Cardiac septum (tissue), 1 donor: ENCODE measurements at regions of chr17 and their contacts with region 1.

Region 1: DNA sequence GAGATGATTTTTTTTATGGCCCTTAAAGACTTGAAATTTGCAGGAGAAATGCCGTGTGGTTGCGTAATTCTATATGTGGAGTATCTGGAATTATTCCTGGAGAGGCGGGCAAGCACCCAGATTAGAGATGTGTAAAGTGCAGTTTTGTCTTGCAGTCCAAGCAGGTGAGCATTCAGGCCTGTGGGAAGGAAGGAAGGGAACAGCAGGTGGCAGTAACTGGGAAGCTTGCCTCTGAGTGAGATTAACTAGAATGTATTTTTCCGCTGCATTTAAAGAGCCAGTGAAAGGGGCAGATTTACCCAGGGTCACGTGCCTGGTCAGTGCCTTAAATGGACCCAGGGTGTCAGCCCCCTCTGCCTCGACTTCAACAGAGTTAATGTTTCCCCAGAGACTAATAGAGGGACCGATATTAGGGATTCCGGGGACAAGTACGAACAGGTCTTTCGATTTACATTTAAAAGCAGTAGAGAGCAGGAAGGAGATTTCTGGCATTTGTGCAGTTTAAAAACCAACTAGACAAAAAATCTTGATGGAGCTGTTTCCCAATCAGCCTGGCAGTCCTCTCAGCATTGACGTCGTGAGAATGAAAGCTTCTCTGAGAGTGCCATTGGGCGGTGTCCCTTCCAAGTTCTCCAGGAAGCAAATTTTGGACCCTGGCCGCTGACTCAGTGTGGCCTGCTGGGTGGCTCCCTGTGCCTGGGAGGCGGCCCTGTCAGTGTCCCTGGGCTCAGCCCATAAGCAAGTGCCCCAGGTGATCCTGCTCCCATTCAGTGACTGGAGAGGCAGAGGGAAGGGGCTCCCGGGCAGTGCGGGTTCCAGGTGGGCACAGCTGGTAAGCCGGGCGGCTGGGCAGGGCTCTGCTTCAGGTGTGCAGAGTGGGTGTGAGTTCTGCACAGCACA is 38.2 kb downstream of the KSR1 start:
- DNase-seq: no peak

Region 2: DNA sequence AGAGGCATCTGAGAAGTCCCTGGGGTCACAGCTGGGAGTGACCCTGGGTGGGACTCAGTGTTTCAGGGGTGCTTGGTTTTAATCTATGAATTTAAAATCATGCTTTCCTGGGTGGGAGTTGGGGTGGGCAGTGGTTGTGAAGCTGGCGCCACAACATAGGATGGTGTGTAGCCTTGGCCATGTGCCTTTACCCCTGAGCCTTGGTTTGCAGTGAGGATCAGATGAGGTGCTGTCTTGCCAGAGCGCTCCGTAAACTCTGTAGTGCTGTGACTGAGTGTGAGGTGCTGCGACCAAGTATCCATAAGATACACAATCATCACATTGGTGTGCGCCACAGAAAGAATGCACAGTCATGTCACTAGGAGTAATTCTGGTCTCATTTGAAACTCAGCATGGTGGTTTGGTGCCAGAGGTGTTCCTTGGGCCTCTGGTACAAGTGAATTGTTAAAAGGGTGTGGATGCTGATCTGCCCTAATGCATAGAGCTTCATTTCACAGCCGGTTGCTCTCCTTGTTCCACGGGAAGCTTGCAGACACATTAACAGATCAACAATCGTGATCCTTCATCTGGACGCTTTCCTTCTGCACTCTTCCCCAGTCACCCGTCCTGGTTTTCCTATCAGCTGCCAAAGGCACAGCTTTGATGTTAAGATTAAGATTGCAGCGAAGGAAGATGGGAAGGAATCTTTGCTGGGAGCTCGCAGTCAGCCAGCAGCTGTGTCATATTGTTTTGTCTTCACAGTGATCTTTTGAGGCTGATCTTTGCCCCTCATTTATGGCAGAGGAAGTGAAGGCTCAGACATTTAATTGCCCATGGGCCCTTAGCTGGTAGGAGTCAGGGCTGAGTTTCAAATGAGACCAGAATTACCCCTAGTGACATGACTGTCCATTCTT is 40.8 kb after region 1 on chr17:
- intact Hi-C with region 1: loop called (anchors 5 kb)
- DNase-seq: no peak

Region 3: GRCh38 chr17:27552469-27552779 is 58.0 kb after region 1 on chr17:
- intact Hi-C with region 1: loop called (anchors 5 kb)
- DNase-seq: no peak

Region 4: GRCh38 chr17:27578718-27579085 is 84.3 kb after region 1 on chr17:
- intact Hi-C with region 1: loop called (anchors 5 kb)
- DNase-seq: no peak